ENCODE measurements at regions of chrX and their contacts with region 1.

Region 1: GRCh38 chrX:51608126-51608525 is 10.6 kb downstream of the CENPVL3 start:
- DNase-seq: no peak
- H3K4me3 Mint-ChIP-seq: no peak overlapping the region
- H3K27ac Mint-ChIP-seq: peak overlapping the region; percentile 57
- H3K4me1 Mint-ChIP-seq: peaks cover 6% of the 10 kb centered on the region
- H3K27me3 Mint-ChIP-seq: peaks cover 3% of the 10 kb centered on the region

Region 2: GRCh38 chrX:50871922-50872453 is 736.1 kb before region 1 on chrX:
- intact Hi-C with region 1: no loop called
- DNase-seq: no peak
- H3K4me3 Mint-ChIP-seq: no peak overlapping the region
- H3K27ac Mint-ChIP-seq: no peak overlapping the region
- H3K4me1 Mint-ChIP-seq: no peaks in the 10 kb centered on the region
- H3K27me3 Mint-ChIP-seq: no peaks in the 10 kb centered on the region

Region 3: GRCh38 chrX:51496501-51497291 is 111.4 kb before region 1 on chrX and contains the start of gene NUDT11:
- intact Hi-C with region 1: loop called (anchors 10 kb)
- DNase-seq: peak; percentile 87
- H3K4me3 Mint-ChIP-seq: peak within 1 kb of the TSS; percentile 90
- H3K27ac Mint-ChIP-seq: peak within 1 kb of the TSS; percentile 86
- H3K4me1 Mint-ChIP-seq: peaks cover 4% of the 10 kb centered on the region
- H3K27me3 Mint-ChIP-seq: peaks cover 18% of the 10 kb centered on the region
- total RNA-seq, gene NUDT11: 3.4 and 3.6 TPM in 2 replicates

Region 4: GRCh38 chrX:51568586-51568985 is 39.5 kb before region 1 on chrX:
- intact Hi-C with region 1: no loop called
- DNase-seq: no peak
- H3K4me3 Mint-ChIP-seq: no peak overlapping the region
- H3K27ac Mint-ChIP-seq: no peak overlapping the region
- H3K4me1 Mint-ChIP-seq: no peaks in the 10 kb centered on the region
- H3K27me3 Mint-ChIP-seq: no peaks in the 10 kb centered on the region

Region 5: DNA sequence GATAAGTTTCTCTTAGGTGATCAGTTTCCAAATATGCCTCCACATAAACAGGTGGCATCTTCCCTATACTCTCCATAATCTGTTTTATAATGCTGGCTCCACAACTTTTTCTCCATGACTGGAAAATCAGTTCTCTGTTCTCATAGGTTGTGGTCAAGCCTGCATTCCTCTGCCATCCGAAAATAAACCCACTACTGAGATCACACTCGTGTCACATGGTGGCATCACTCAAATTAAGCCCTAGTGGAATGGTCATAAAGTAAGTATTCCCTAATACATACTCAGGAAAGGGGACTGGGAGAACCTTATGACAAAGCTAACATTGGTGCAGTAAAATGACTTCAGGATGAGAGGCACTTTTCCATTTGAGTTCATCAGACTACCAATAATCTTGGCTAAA is 423.2 kb after region 1 on chrX:
- intact Hi-C with region 1: no loop called
- DNase-seq: no peak
- H3K4me3 Mint-ChIP-seq: no peak overlapping the region
- H3K27ac Mint-ChIP-seq: no peak overlapping the region
- H3K4me1 Mint-ChIP-seq: no peaks in the 10 kb centered on the region
- H3K27me3 Mint-ChIP-seq: no peaks in the 10 kb centered on the region